Ovary (tissue), 10 donors: ENCODE measurements at regions of chrX and their contacts with region 1.

Region 1: GRCh38 chrX:45515262-45516215 is 314.9 kb upstream of the DIPK2B start:
- DNase-seq: peak; percentile 37 to 80 (median 54)
- H3K4me3 ChIP-seq: no peak overlapping the region
- H3K27ac ChIP-seq: no peak overlapping the region
- H3K4me1 ChIP-seq: peaks cover 5% of the 10 kb centered on the region
- H3K27me3 ChIP-seq: no peaks in the 10 kb centered on the region
- CTCF ChIP-seq: peak in 2 of 3 donors; percentile 44 to 48
- EP300 ChIP-seq: peak; percentile 45
- POLR2A ChIP-seq: no peak

Region 2: GRCh38 chrX:45322382-45322781 is 193.2 kb before region 1 on chrX:
- intact Hi-C with region 1: loop called in 1 of 4 experiments (anchors 5 kb)
- DNase-seq: peak; percentile 24 to 56 (median 36)
- H3K4me3 ChIP-seq: no peak overlapping the region
- H3K27ac ChIP-seq: no peak overlapping the region
- H3K4me1 ChIP-seq: peaks cover 3% of the 10 kb centered on the region
- H3K27me3 ChIP-seq: no peaks in the 10 kb centered on the region
- CTCF ChIP-seq: peak in 2 of 3 donors; percentile 33 to 47
- EP300 ChIP-seq: no peak
- POLR2A ChIP-seq: no peak

Region 3: GRCh38 chrX:45769761-45770582 is 254.4 kb after region 1 on chrX:
- intact Hi-C with region 1: loop called in 1 of 4 experiments (anchors 10 kb)
- DNase-seq: peak; percentile 66 to 79 (median 76)
- H3K4me3 ChIP-seq: peak overlapping the region; percentile 38
- H3K27ac ChIP-seq: peak overlapping the region; percentile 17 to 58
- H3K4me1 ChIP-seq: peaks cover 3% of the 10 kb centered on the region
- H3K27me3 ChIP-seq: no peaks in the 10 kb centered on the region
- CTCF ChIP-seq: no peak
- EP300 ChIP-seq: no peak
- POLR2A ChIP-seq: peak; percentile 23

Region 4: GRCh38 chrX:45972636-45973035 is 457.1 kb after region 1 on chrX:
- intact Hi-C with region 1: no loop called
- DNase-seq: no peak
- H3K4me3 ChIP-seq: no peak overlapping the region
- H3K27ac ChIP-seq: no peak overlapping the region
- H3K4me1 ChIP-seq: no peaks in the 10 kb centered on the region
- H3K27me3 ChIP-seq: no peaks in the 10 kb centered on the region
- CTCF ChIP-seq: no peak
- EP300 ChIP-seq: no peak
- POLR2A ChIP-seq: no peak

Region 5: GRCh38 chrX:46408553-46409407 is 893.2 kb after region 1 on chrX:
- intact Hi-C with region 1: loop called in 1 of 4 experiments (anchors 10 kb)
- DNase-seq: peak; percentile 68 to 87 (median 84)
- H3K4me3 ChIP-seq: no peak overlapping the region
- H3K27ac ChIP-seq: no peak overlapping the region
- H3K4me1 ChIP-seq: peaks cover 3% of the 10 kb centered on the region
- H3K27me3 ChIP-seq: no peaks in the 10 kb centered on the region
- CTCF ChIP-seq: peak; percentile 40 to 65 (median 63)
- EP300 ChIP-seq: no peak
- POLR2A ChIP-seq: no peak